HepG2 (cell line): ENCODE measurements at regions of chr2 and their contacts with region 1.

Region 1: DNA sequence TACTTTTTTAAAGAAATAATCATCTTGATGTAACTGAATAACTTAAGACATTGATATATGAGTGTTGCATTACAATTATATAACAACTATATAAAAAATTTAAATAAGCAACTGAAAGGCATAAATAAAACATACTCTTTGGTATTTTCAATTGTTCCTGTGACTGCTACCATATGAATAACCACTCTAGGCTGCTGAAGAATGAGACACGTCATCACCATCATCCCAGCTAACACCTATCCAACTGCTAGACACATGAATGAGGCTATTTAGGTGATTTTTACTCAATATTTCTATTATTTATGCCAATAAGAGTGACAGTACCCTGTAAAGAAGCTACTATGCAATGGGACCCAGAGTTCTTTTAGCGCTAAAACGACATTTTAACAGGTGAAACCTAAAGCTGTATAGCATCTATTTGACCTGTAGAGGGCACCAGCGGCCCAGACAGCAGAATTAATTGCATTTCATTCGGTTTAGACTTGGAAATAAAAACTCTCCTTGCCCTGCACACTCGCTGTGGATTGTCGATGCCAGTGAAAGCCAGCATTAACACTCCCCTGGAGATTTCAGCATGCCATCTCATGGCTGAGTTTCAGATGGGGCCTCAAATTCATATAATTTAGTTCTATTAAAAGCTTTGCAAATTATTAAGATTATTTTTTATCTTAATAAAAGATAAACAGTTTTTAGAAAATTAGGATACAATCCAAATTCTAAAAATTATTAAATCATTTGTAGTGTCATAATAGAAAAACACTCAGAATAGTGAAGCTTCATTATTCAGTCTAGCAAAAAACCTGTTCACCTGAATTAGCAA is 89.4 kb upstream of the MAP2 start:
- DNase-seq: peak; percentile 53
- ATAC-seq: peak; percentile 87
- H3K4me3 ChIP-seq: no peak overlapping the region
- H3K27ac ChIP-seq: no peak overlapping the region
- H3K4me1 ChIP-seq: no peaks in the 10 kb centered on the region
- H3K27me3 ChIP-seq: no peaks in the 10 kb centered on the region
- CTCF ChIP-seq: peak; percentile 84
- EP300 ChIP-seq: no peak
- POLR2A ChIP-seq: no peak
- RAD21 ChIP-seq: peak; percentile 54; the same call in 1 of the 2 replicates

Region 2: DNA sequence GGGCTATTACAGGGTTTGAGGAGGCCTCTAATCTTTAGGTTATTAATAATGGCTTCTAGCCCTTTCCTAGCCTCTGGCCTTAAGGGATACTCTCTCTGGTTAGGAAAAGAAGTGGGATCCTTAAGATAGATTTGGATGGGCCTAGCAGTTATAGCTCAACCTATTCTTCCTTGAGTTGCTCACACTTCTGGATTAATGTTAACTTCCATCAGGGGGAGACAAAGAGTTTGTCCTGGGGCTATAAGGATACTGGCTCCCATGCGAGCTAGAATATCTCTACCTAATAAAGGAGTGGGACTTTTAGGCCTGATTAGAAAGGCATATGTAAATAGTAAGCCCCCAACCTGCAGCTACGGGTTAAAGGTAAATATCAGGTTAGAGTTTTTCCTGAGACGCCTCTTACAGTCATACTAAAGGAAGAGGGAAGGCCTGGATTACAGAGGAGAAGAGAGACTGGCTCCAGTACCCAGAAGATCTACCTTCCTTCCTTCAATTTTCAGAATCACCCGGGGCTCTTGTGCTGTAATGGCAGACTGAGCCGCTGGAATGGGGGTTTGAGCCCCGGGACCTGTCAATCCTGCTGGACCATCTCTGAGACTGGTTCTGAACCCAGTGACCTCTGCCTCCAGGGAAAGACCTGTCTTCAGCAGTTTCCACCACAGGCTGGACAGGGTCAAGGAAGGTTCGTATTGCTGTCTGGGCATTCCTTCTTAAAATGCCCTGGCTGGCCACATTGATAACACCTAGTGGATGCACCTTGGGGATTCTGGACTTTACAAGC is 941.9 kb before region 1 on chr2:
- CTCF ChIA-PET with region 1: no interaction called
- POLR2A ChIA-PET with region 1: no interaction called
- in situ Hi-C with region 1: no loop called
- intact Hi-C with region 1: loop called (anchors 1 kb)
- DNase-seq: peak; percentile 25
- ATAC-seq: peak; percentile 68
- H3K4me3 ChIP-seq: no peak overlapping the region
- H3K27ac ChIP-seq: no peak overlapping the region
- H3K4me1 ChIP-seq: no peaks in the 10 kb centered on the region
- H3K27me3 ChIP-seq: peaks cover 0 to 13% of the 10 kb centered on the region in 2 experiments; a peak in 1 of 5 replicates
- CTCF ChIP-seq: peak; percentile 38; the same call in 1 of the 2 replicates
- EP300 ChIP-seq: no peak
- POLR2A ChIP-seq: no peak
- RAD21 ChIP-seq: no peak

Region 3: GRCh38 chr2:209423562-209424198 is 89.3 kb after region 1 on chr2 and contains the start of gene MAP2:
- CTCF ChIA-PET with region 1: interaction called, 29 read pairs
- POLR2A ChIA-PET with region 1: no interaction called
- in situ Hi-C with region 1: no loop called
- intact Hi-C with region 1: loop called (anchors 1 kb)
- DNase-seq: peak; percentile 61
- ATAC-seq: peak; percentile 99
- H3K4me3 ChIP-seq: peak within 1 kb of the TSS; percentile 29 to 63 (median 41); a peak in 5 of 6 replicates
- H3K27ac ChIP-seq: no peak within 1 kb of the TSS
- H3K4me1 ChIP-seq: peaks cover 11% of the 10 kb centered on the region
- H3K27me3 ChIP-seq: peaks cover 0 to 5% of the 10 kb centered on the region in 2 experiments; a peak in 2 of 5 replicates
- CTCF ChIP-seq: peak; percentile 81
- EP300 ChIP-seq: peak in 1 of 2 experiments; percentile 22; a peak in 1 of 4 replicates
- POLR2A ChIP-seq: no peak
- RAD21 ChIP-seq: peak; percentile 94
- total RNA-seq, gene MAP2: not detected in 2 replicates

Region 4: GRCh38 chr2:209577376-209578357 is 243.3 kb after region 1 on chr2:
- CTCF ChIA-PET with region 1: interaction called, 24 read pairs
- POLR2A ChIA-PET with region 1: no interaction called
- in situ Hi-C with region 1: loop called (anchors 25 kb)
- intact Hi-C with region 1: loop called (anchors 1 kb)
- DNase-seq: peak; percentile 10
- ATAC-seq: no peak
- H3K4me3 ChIP-seq: no peak overlapping the region
- H3K27ac ChIP-seq: no peak overlapping the region
- H3K4me1 ChIP-seq: no peaks in the 10 kb centered on the region
- H3K27me3 ChIP-seq: no peaks in the 10 kb centered on the region
- CTCF ChIP-seq: peak; percentile 24; the same call in 1 of the 2 replicates
- EP300 ChIP-seq: no peak
- POLR2A ChIP-seq: no peak
- RAD21 ChIP-seq: no peak

Region 5: DNA sequence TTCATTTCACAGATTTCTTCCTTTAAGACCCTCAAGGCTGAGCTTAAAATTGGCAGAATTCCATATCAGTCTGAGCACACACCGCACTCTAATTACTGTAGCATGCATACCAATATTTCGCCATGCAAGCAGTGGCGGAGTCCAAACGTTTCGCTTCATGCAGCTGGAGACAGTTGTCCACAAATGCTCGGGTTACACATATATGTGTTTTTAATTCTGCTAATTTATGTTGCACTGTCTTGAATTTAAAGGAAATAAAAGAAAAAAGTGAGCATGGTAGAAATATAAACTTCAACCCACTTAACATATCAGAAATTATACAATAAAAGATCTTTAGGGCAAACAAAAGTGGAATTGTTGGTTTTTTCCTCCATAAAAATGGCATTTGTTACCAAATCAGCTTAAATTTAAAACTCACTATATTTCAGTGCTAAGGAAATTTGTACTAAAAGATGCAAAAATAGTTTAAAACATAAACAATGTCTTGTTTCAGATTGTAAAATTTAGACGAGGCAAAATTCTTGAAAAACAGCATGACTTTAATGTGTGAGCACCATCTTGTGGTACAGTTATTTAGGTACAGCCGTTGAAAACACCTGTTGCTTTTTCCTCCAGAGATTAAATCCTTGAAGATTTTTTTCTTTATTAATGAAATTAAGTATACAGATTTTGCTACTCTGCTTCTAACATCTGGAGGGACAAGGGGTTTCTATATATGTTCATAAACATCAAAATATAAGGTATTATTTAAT is 860.9 kb after region 1 on chr2:
- CTCF ChIA-PET with region 1: no interaction called
- POLR2A ChIA-PET with region 1: no interaction called
- in situ Hi-C with region 1: no loop called
- intact Hi-C with region 1: loop called (anchors 5 kb)
- DNase-seq: peak; percentile 51
- ATAC-seq: peak; percentile 88
- H3K4me3 ChIP-seq: peak overlapping the region; percentile 5 to 44 (median 34); a peak in 4 of 6 replicates
- H3K27ac ChIP-seq: no peak overlapping the region
- H3K4me1 ChIP-seq: peaks cover 7% of the 10 kb centered on the region; the same call in 1 of the 2 replicates
- H3K27me3 ChIP-seq: no peaks in the 10 kb centered on the region
- CTCF ChIP-seq: peak; percentile 77
- EP300 ChIP-seq: no peak
- POLR2A ChIP-seq: no peak
- RAD21 ChIP-seq: peak; percentile 82